GM12878 (cell line): ENCODE measurements at regions of chr10 and their contacts with region 1.

Region 1: DNA sequence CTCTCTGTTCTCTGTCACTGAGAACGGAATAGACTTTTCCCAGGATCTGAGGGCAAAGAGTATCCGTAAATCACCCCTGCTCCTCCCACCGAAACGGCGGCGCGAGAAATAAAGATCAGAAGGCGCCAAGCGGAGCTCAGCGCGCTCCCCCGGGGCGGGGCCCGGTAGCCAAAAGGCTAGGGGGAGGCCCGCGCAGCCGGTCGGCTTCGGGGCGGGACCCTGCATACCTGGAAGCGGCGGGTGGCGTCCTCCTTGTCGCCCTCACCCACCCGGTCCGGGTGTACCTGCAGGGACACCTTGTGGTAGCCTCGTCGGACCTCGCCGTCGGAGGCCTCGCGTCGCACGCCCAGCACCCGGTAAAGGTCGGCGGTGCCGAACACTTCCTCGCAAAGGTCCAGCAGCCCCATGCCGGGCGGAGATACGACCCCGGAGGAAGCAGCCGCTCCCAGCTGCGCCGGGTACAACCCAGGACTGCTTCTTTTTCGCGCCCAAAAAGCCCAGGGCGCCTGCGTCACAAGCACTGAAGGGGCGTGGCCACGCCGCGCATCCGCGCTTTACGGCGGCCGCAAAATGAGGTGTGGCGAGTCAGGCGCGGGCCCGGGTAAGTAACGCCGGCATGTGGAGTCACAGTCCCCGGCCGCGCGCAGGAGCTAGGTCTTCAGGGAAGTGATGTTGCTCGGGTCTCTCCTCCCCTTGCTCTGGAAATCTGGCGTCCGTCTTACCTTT is at the start of gene DNAJC9:
- DNase-seq: peak; percentile 85
- ATAC-seq: peak; percentile 91
- H3K4me3 ChIP-seq: peak within 1 kb of the TSS; percentile 89
- H3K27ac ChIP-seq: peak within 1 kb of the TSS; percentile 88
- H3K4me1 ChIP-seq: peaks cover 10% of the 10 kb centered on the region
- H3K27me3 ChIP-seq: no peaks in the 10 kb centered on the region
- CTCF ChIP-seq: peak in 1 of 3 experiments; percentile 5; a peak in 1 of 6 replicates
- EP300 ChIP-seq: no peak
- POLR2A ChIP-seq: peak; percentile 98
- RAD21 ChIP-seq: no peak
- polyA plus RNA-seq, gene DNAJC9: 15.0 to 16.0 TPM

Region 2: GRCh38 chr10:73167783-73168464 is 79.0 kb before region 1 on chr10 and contains the starts of genes ECD and FAM149B1:
- CTCF ChIA-PET with region 1: interaction called, 3 read pairs
- POLR2A ChIA-PET with region 1: interaction called, 7 read pairs
- RAD21 ChIA-PET with region 1: interaction called, 4 read pairs
- SMC1A ChIA-PET with region 1: interaction called, 3 read pairs
- in situ Hi-C with region 1: no loop called
- intact Hi-C with region 1: loop called (anchors 2 kb)
- DNase-seq: peak; percentile 79
- ATAC-seq: peak; percentile 95
- H3K4me3 ChIP-seq: peak within 1 kb of the TSS; percentile 96
- H3K27ac ChIP-seq: peak within 1 kb of the TSS; percentile 84
- H3K4me1 ChIP-seq: no peaks in the 10 kb centered on the region
- H3K27me3 ChIP-seq: no peaks in the 10 kb centered on the region
- CTCF ChIP-seq: peak in 2 of 3 experiments; percentile 27 to 30; a peak in 3 of 6 replicates
- EP300 ChIP-seq: peak in 1 of 2 experiments; percentile 37; a peak in 1 of 4 replicates
- POLR2A ChIP-seq: peak; percentile 96
- RAD21 ChIP-seq: no peak
- polyA plus RNA-seq, gene ECD: 27.3 to 29.9 TPM
- polyA plus RNA-seq, gene FAM149B1: 6.6 to 11.6 TPM

Region 3: DNA sequence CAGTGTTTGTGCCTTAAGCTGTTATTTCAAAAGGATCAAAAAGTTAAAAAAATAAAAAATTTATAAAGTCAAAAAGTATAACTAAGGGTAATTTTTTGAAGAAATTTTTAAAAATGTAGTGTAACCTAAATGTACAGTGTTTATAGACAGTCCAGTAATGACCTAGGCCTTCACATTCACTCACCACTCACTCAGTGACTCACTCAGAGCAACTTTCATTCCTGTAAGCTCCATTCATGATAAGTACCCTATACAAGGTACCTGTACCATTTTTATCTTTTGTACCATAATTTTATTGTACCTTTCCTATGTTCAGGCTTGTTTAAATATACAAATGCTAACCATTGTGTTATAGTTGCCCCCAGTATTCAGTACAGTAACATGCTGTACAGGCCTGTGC is 21.4 kb before region 1 on chr10:
- CTCF ChIA-PET with region 1: no interaction called
- POLR2A ChIA-PET with region 1: no interaction called
- RAD21 ChIA-PET with region 1: no interaction called
- SMC1A ChIA-PET with region 1: no interaction called
- in situ Hi-C with region 1: no loop called
- intact Hi-C with region 1: no loop called
- DNase-seq: no peak
- ATAC-seq: no peak
- H3K4me3 ChIP-seq: no peak overlapping the region
- H3K27ac ChIP-seq: no peak overlapping the region
- H3K4me1 ChIP-seq: no peaks in the 10 kb centered on the region
- H3K27me3 ChIP-seq: no peaks in the 10 kb centered on the region
- CTCF ChIP-seq: no peak
- EP300 ChIP-seq: no peak
- POLR2A ChIP-seq: no peak
- RAD21 ChIP-seq: no peak

Region 4: GRCh38 chr10:73296946-73297345 is 50.0 kb after region 1 on chr10:
- CTCF ChIA-PET with region 1: no interaction called
- POLR2A ChIA-PET with region 1: no interaction called
- RAD21 ChIA-PET with region 1: no interaction called
- SMC1A ChIA-PET with region 1: no interaction called
- in situ Hi-C with region 1: no loop called
- intact Hi-C with region 1: no loop called
- DNase-seq: no peak
- ATAC-seq: no peak
- H3K4me3 ChIP-seq: no peak overlapping the region
- H3K27ac ChIP-seq: no peak overlapping the region
- H3K4me1 ChIP-seq: no peaks in the 10 kb centered on the region
- H3K27me3 ChIP-seq: no peaks in the 10 kb centered on the region
- CTCF ChIP-seq: no peak
- EP300 ChIP-seq: no peak
- POLR2A ChIP-seq: no peak
- RAD21 ChIP-seq: no peak

Region 5: GRCh38 chr10:73358331-73359279 is 111.7 kb after region 1 on chr10 and contains the start of gene CFAP70:
- CTCF ChIA-PET with region 1: no interaction called
- POLR2A ChIA-PET with region 1: interaction called, 7 read pairs
- RAD21 ChIA-PET with region 1: no interaction called
- SMC1A ChIA-PET with region 1: no interaction called
- in situ Hi-C with region 1: no loop called
- intact Hi-C with region 1: loop called (anchors 1 kb)
- DNase-seq: peak; percentile 96
- ATAC-seq: peak; percentile 98
- H3K4me3 ChIP-seq: peak within 1 kb of the TSS; percentile 71
- H3K27ac ChIP-seq: no peak within 1 kb of the TSS
- H3K4me1 ChIP-seq: peaks cover 3% of the 10 kb centered on the region; the same call in 1 of the 2 replicates
- H3K27me3 ChIP-seq: no peaks in the 10 kb centered on the region
- CTCF ChIP-seq: no peak
- EP300 ChIP-seq: no peak
- POLR2A ChIP-seq: peak; percentile 60
- RAD21 ChIP-seq: no peak
- polyA plus RNA-seq, gene CFAP70: 0.21 to 0.46 TPM

Region 6: GRCh38 chr10:73401636-73402035 is 154.7 kb after region 1 on chr10:
- CTCF ChIA-PET with region 1: no interaction called
- POLR2A ChIA-PET with region 1: no interaction called
- RAD21 ChIA-PET with region 1: no interaction called
- SMC1A ChIA-PET with region 1: no interaction called
- in situ Hi-C with region 1: no loop called
- intact Hi-C with region 1: no loop called
- DNase-seq: no peak
- ATAC-seq: no peak
- H3K4me3 ChIP-seq: no peak overlapping the region
- H3K27ac ChIP-seq: no peak overlapping the region
- H3K4me1 ChIP-seq: no peaks in the 10 kb centered on the region
- H3K27me3 ChIP-seq: no peaks in the 10 kb centered on the region
- CTCF ChIP-seq: no peak
- EP300 ChIP-seq: no peak
- POLR2A ChIP-seq: no peak
- RAD21 ChIP-seq: no peak

Region 7: DNA sequence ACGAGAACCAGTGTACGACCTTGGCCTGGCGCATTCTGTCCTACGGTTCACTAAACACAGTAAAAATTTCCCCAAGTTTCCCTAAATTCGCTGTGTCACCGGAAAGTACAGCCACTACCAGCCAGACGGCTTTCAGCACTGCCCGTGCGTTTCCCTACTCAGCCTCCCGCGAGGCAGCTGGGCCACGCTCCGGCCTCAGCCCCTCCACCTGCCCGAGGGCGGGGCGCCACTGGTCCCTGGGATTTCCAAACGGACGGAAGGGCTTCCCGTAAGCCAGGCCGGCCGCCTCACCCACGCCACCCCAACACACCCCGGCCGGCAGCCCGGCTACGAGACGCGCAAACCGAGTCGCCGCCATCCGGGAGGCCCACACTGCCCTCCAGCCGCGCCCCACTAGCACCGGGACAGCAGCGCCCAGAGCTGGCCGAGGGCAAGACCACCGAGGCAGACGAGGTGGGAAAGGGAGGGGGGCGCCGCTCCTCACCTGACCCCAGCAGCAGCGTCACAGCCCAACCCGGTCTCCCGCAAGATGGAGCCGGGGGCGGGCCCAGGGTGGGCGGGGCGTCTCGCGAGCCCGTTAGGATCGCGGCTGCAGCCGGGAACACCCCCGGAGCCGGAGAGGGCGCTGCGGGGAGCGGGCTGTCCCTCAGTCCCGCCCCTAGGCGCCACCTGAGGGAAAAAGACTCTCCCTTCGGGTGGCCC is 166.7 kb after region 1 on chr10 and contains the start of gene ANXA7:
- CTCF ChIA-PET with region 1: interaction called, 4 read pairs
- POLR2A ChIA-PET with region 1: interaction called, 6 read pairs
- RAD21 ChIA-PET with region 1: no interaction called
- SMC1A ChIA-PET with region 1: no interaction called
- in situ Hi-C with region 1: no loop called
- intact Hi-C with region 1: loop called (anchors 5 kb)
- DNase-seq: peak; percentile 47
- ATAC-seq: peak; percentile 97
- H3K4me3 ChIP-seq: peak within 1 kb of the TSS; percentile 84
- H3K27ac ChIP-seq: peak within 1 kb of the TSS; percentile 93
- H3K4me1 ChIP-seq: no peaks in the 10 kb centered on the region
- H3K27me3 ChIP-seq: no peaks in the 10 kb centered on the region
- CTCF ChIP-seq: peak; percentile 13 to 26 (median 15); a peak in 3 of 6 replicates
- EP300 ChIP-seq: no peak
- POLR2A ChIP-seq: peak; percentile 88
- RAD21 ChIP-seq: no peak
- polyA plus RNA-seq, gene ANXA7: 70.6 to 75.8 TPM